Activated CD8-positive, alpha-beta T cell treated with anti-CD3 and anti-CD28 coated beads for 36 hours (primary cell): ENCODE measurements at regions of chr9 and their contacts with region 1.

Region 1: GRCh38 chr9:133992780-133993634 is 883 bp upstream of the VAV2 start:
- DNase-seq: peak; percentile 80
- ATAC-seq: peak; percentile 83
- H3K4me3 Mint-ChIP-seq: peak overlapping the region; percentile 60
- H3K27ac Mint-ChIP-seq: no peak overlapping the region
- H3K4me1 Mint-ChIP-seq: peaks cover 2% of the 10 kb centered on the region
- H3K27me3 Mint-ChIP-seq: peaks cover 3% of the 10 kb centered on the region
- CTCF ChIP-seq: peak; percentile 30

Region 2: GRCh38 chr9:133782157-133783130 is 210.6 kb before region 1 on chr9:
- CTCF ChIA-PET with region 1: interaction called, 122 read pairs
- POLR2A ChIA-PET with region 1: interaction called, 3 read pairs
- intact Hi-C with region 1: no loop called
- DNase-seq: peak; percentile 84
- ATAC-seq: peak; percentile 70
- H3K4me3 Mint-ChIP-seq: no peak overlapping the region
- H3K27ac Mint-ChIP-seq: no peak overlapping the region
- H3K4me1 Mint-ChIP-seq: no peaks in the 10 kb centered on the region
- H3K27me3 Mint-ChIP-seq: no peaks in the 10 kb centered on the region
- CTCF ChIP-seq: peak; percentile 73

Region 3: GRCh38 chr9:133869674-133870405 is 123.2 kb before region 1 on chr9:
- CTCF ChIA-PET with region 1: interaction called, 13 read pairs
- POLR2A ChIA-PET with region 1: no interaction called
- intact Hi-C with region 1: no loop called
- DNase-seq: peak; percentile 76
- ATAC-seq: peak; percentile 83
- H3K4me3 Mint-ChIP-seq: peak overlapping the region; percentile 37
- H3K27ac Mint-ChIP-seq: peak overlapping the region; percentile 4
- H3K4me1 Mint-ChIP-seq: peaks cover 16% of the 10 kb centered on the region
- H3K27me3 Mint-ChIP-seq: no peaks in the 10 kb centered on the region
- CTCF ChIP-seq: no peak

Region 4: DNA sequence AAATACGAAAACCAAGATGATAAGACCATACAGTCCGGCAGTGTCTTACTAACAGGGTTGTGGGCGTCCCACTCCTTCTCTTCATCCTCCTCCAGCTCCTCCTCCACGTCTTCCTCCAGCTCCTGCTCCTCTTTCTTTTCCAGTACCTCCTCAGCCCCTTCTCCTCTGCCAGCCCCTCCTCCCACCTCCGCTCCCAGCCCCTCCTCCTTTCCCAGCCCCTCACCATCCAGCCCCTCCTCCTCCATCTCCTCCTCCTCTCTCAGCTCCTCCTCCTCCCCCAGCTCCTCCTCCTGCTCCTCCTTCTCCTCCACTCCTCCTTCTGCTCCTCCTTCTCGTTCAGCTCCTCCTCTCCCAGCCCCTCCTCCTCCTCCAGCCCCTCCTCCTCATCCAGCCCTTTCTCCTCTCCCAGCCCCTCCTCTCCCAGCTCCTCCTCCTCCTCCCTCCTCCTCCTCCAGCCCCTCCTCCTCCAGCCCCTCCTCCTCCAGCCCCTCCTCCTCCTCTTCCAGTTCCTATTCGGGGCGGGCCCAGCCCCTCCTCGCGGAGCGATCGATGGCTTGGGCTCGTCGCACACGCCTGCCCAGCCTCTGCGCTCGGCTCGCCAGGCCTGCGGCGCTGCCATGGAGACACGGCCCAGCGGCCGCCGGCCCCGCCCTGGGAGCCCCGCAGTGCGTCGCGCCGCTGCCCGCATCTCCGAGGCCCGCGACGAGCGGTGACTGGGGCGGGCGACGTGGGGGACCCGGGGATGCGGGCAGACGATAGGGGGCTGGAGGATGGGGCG is 32.0 kb after region 1 on chr9 and contains the start of gene BRD3OS:
- CTCF ChIA-PET with region 1: interaction called, 15 read pairs
- POLR2A ChIA-PET with region 1: no interaction called
- intact Hi-C with region 1: no loop called
- DNase-seq: peak; percentile 95
- ATAC-seq: peak; percentile 95
- H3K4me3 Mint-ChIP-seq: peak within 1 kb of the TSS; percentile 77
- H3K27ac Mint-ChIP-seq: no peak within 1 kb of the TSS
- H3K4me1 Mint-ChIP-seq: peaks cover 5% of the 10 kb centered on the region
- H3K27me3 Mint-ChIP-seq: no peaks in the 10 kb centered on the region
- CTCF ChIP-seq: no peak
- total RNA-seq, gene BRD3OS: 8.1 to 8.2 TPM